PC-9 (cell line): ENCODE measurements at regions of chr1 and their contacts with region 1.

Region 1: DNA sequence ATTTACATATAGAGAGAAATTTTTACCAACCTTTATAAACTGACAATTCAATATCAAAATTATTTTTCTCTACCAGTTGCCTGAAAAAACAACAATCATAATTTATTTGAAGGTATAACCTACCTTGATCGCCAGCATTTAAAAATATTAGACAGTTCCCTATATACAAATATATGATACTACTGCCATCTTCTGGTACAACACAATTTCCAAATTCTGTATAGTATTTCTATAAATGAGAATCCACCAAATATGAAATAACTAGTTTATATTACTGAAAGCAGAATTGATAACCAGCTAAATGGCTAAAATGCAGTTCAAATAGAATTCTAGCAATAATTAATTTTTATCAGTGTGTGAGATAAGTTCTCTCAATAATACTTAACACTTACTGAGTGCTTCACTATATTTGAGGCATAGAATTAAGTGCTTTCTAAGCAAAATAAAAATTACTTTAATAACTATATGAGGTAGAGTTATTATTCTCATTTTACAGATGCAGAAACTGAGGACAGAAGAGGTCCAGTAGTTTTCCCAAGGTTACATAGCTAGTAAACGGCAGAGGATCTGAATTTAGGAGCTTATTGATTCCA is 75.6 kb downstream of the PIGK start:
- DNase-seq: peak in 1 of 2 experiments; percentile 46
- H3K4me3 ChIP-seq: no peak overlapping the region
- H3K27ac ChIP-seq: no peak overlapping the region
- H3K4me1 ChIP-seq: no peaks in the 10 kb centered on the region
- H3K27me3 ChIP-seq: no peaks in the 10 kb centered on the region
- CTCF ChIP-seq: peak; percentile 74

Region 2: GRCh38 chr1:75908717-75909152 is 1234.9 kb before region 1 on chr1:
- CTCF ChIA-PET with region 1: no interaction called
- POLR2A ChIA-PET with region 1: no interaction called
- intact Hi-C with region 1: loop called (anchors 1 kb)
- DNase-seq: peak; percentile 15 to 38
- H3K4me3 ChIP-seq: no peak overlapping the region
- H3K27ac ChIP-seq: no peak overlapping the region
- H3K4me1 ChIP-seq: no peaks in the 10 kb centered on the region
- H3K27me3 ChIP-seq: no peaks in the 10 kb centered on the region; the same call in 1 of the 2 replicates
- CTCF ChIP-seq: peak; percentile 74

Region 3: DNA sequence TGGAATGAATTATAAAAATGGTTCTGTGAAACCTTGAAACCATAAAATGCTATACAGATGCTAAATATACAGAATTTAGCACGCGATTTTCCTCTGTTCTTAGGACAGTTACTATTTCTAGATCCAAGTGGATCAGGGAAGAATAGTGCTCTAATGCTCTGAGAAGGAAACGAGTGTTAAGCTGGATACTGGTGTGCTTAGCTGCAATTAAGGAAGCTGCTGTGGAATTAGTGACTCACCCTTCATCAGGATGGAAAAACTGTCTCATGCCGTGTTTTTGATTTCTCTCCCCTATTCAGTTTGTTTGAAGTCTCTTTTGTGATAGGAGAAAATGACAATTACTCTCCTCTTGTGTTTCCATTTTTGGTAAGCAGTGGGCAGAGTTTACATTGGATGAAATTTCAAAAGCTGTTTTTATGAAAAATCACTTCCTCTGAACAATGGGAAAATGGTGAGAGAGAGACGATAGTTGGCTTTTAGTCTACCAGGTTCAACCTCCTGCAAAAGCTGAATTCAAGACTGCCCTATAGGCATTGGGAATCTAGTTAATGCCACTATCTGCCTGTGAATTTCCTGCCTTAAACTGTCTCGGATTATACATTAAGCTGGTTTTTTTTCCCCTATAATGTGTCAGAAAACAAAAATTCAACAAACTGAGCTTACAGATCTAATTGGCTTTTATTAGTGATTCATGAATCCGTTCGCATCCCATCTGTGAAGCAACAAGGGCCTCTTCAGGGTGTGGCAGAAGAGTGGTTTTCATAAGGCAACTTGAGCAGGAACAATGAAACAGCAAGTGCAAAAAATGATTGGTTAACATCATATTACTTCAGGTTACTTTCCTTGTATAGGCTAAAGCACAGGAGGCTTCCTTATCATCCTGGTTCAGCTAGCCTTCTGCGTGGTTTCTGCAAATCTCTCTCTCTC is 889.3 kb before region 1 on chr1:
- CTCF ChIA-PET with region 1: no interaction called
- POLR2A ChIA-PET with region 1: interaction called, 14 read pairs
- intact Hi-C with region 1: no loop called
- DNase-seq: no peak
- H3K4me3 ChIP-seq: no peak overlapping the region
- H3K27ac ChIP-seq: no peak overlapping the region
- H3K4me1 ChIP-seq: no peaks in the 10 kb centered on the region
- H3K27me3 ChIP-seq: no peaks in the 10 kb centered on the region
- CTCF ChIP-seq: no peak

Region 4: DNA sequence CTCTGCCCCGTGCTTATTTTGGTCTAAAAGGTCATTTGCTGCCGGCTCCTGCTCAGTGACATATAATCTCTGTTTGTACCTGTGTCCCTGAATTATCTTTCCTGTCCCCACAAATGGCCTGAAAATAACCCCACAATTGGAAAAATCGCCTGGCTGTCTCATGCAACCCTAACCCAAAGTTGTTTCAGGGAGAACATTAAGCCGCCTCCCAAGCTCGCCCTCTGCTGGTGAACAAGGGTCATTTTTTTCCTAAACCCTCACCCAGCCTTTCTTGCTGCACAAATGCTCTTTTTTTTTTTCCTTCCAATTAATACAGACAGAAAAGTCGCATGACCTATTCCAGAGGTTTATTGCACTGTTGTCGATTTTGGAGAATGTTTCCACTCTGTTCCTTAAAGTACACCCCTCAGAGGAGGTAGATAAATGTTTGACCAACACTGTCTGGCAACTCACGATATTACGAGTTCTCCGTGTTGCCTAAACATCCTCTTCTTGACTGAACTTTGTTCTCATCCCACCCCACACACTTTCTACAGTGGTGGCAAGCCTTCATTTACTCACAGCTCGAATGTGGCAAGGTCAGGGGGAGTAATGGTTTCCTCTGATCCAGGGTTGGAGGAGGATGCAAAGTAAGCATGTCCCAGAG is 390.2 kb after region 1 on chr1:
- CTCF ChIA-PET with region 1: interaction called, 10 read pairs
- POLR2A ChIA-PET with region 1: no interaction called
- intact Hi-C with region 1: loop called (anchors 1 kb)
- DNase-seq: peak; percentile 35 to 50
- H3K4me3 ChIP-seq: no peak overlapping the region
- H3K27ac ChIP-seq: no peak overlapping the region
- H3K4me1 ChIP-seq: peaks cover 33% of the 10 kb centered on the region
- H3K27me3 ChIP-seq: no peaks in the 10 kb centered on the region
- CTCF ChIP-seq: peak; percentile 96

Region 5: DNA sequence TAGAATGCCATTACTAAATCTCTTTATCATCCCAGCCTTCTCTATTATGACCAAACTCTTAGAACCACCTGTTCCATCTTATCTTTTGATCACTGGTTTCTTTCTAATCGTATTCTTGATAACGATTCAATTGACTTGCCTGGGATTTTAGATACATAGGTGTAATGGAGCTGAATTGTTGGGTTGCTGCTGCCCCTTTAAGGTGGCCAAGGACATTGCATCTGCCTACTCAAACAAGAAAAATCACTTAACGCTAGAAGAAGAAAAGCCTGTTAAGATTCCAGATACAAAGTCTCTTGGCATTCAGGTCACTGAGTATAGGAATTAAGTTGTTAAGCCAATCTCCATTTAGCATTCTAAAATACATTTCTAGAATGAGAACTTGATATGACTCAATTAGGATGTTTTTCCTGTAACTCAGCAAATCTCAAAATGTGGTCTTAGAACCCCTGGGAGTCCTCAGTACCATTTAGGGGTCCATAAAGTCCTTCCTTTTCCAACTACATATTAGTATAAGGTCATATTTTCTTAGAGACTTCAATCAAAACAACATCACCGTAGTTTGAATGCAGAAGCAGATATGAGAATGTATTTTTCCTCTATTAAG is 757.2 kb after region 1 on chr1:
- CTCF ChIA-PET with region 1: no interaction called
- POLR2A ChIA-PET with region 1: no interaction called
- intact Hi-C with region 1: loop called (anchors 2 kb)
- DNase-seq: peak; percentile 19 to 60
- H3K4me3 ChIP-seq: no peak overlapping the region
- H3K27ac ChIP-seq: no peak overlapping the region
- H3K4me1 ChIP-seq: no peaks in the 10 kb centered on the region; the same call in 1 of the 2 replicates
- H3K27me3 ChIP-seq: no peaks in the 10 kb centered on the region
- CTCF ChIP-seq: peak; percentile 89